Naive thymus-derived CD4-positive, alpha-beta T cell (primary cell): ENCODE measurements at regions of chr12 and their contacts with region 1.

Region 1: DNA sequence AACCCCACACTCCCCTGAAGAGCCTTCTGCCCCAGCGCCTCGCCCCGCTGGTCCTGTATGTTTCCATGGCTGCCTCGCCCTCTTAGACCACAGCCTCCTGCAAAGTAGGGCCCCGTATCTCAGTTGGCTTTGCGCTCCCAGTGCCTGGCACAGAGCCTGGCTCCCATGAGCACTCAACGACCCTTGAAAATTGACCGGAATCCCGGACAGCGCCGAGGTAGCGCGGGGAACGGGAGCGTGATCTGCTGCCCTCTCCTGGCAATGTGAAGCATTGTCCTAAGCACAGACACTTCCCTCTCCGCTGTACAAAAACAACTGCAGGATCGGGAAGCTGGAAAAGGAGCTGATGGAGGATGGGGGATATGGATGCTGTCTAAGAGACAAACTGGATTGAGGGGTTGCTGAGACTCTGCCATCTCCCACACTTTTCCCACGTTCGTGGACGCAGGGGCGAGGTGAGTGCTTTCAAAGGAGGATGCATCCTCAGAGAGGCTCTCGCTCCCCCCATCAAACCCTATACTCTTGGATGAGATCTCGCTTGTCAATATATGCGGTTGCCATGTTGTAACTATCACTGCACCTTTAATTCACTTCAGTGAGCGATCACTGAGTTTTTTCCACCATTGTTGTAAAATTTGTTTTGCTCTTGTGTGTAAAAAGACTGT is 10.7 kb upstream of the FKBP4 start:
- DNase-seq: peak in 8 of 9 donors; percentile 12 to 59 (median 42)
- ATAC-seq: peak; percentile 88
- H3K4me3 ChIP-seq: peak overlapping the region; percentile 27
- H3K4me3 Mint-ChIP-seq: peak overlapping the region; percentile 70 to 87 (median 78)
- H3K27ac ChIP-seq: no peak overlapping the region
- H3K27ac Mint-ChIP-seq: peak overlapping the region in 1 of 9 donors; percentile 66
- H3K4me1 ChIP-seq: peaks cover 0 to 6% of the 10 kb centered on the region in 2 donors
- H3K4me1 Mint-ChIP-seq: peaks cover 4 to 13% (median 9%) of the 10 kb centered on the region in 7 donors
- H3K27me3 ChIP-seq: no peaks in the 10 kb centered on the region
- H3K27me3 Mint-ChIP-seq: peaks cover 5 to 46% (median 15%) of the 10 kb centered on the region in 5 donors

Region 2: GRCh38 chr12:2682296-2683251 is 101.5 kb before region 1 on chr12:
- CTCF ChIA-PET with region 1: interaction called, 42 read pairs
- POLR2A ChIA-PET with region 1: interaction called, 5 read pairs
- intact Hi-C with region 1: loop called (anchors 1 kb)
- DNase-seq: peak in 7 of 9 donors; percentile 37 to 70 (median 59)
- ATAC-seq: peak; percentile 71
- H3K4me3 ChIP-seq: no peak overlapping the region
- H3K4me3 Mint-ChIP-seq: peak overlapping the region in 3 of 10 donors; percentile 43 to 67 (median 47)
- H3K27ac ChIP-seq: no peak overlapping the region
- H3K27ac Mint-ChIP-seq: peak overlapping the region; percentile 76 to 98 (median 88)
- H3K4me1 ChIP-seq: no peaks in the 10 kb centered on the region
- H3K4me1 Mint-ChIP-seq: peaks cover 5 to 12% (median 9%) of the 10 kb centered on the region in 7 donors
- H3K27me3 ChIP-seq: no peaks in the 10 kb centered on the region
- H3K27me3 Mint-ChIP-seq: no peaks in the 10 kb centered on the region

Region 3: GRCh38 chr12:2691006-2691344 is 93.1 kb before region 1 on chr12:
- CTCF ChIA-PET with region 1: interaction called, 25 read pairs
- POLR2A ChIA-PET with region 1: interaction called, 6 read pairs
- intact Hi-C with region 1: loop called in 1 of 2 experiments (anchors 1 kb)
- DNase-seq: peak in 8 of 9 donors; percentile 36 to 66 (median 56)
- ATAC-seq: peak; percentile 75
- H3K4me3 ChIP-seq: peak overlapping the region; percentile 92
- H3K4me3 Mint-ChIP-seq: peak overlapping the region; percentile 88 to 100 (median 93)
- H3K27ac ChIP-seq: peak overlapping the region; percentile 79
- H3K27ac Mint-ChIP-seq: peak overlapping the region; percentile 60 to 93 (median 86)
- H3K4me1 ChIP-seq: peaks cover 15 to 22% of the 10 kb centered on the region in 2 donors
- H3K4me1 Mint-ChIP-seq: peaks cover 36 to 57% (median 49%) of the 10 kb centered on the region in 7 donors
- H3K27me3 ChIP-seq: no peaks in the 10 kb centered on the region
- H3K27me3 Mint-ChIP-seq: peaks cover 0 to 12% (median 1%) of the 10 kb centered on the region in 5 donors

Region 4: DNA sequence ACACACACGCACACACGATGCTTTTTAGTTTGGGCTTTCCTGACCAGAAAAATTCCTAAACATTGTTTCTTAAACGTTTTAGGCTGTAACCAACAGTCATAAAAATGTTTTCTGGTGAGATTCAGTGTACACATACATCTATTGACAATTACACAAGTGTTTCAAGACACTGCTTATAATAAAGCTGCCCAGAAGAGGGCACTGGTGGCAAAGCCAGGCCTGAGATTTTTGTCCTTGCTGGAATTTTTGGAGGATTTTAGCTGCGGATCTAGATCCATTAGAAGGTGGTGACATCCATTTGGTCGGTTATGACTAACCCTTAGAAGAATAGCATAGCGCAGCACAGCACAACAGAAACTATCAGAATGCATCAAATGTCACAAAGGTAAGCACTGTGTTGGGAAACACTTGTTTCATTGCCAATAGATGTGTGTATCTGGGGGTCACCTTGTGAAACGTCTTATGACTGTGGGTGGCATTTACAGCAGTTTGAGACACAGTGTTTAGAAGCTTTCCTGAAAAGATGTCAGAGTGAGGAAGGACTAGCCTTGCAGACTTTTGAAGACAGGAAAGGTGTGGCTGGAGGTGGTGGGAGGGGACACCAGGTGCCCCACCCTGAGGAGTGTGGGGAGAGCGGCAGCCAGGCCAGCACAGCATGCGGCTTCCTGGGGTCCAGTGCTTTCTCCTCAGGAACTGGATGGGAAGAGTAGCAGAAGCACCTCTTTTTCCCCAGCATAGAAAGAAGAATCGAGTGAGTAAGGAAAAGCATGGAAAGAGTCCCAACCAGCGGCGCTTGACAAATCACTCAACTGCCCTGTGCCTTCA is 44.0 kb before region 1 on chr12:
- CTCF ChIA-PET with region 1: no interaction called
- POLR2A ChIA-PET with region 1: no interaction called
- intact Hi-C with region 1: loop called in 1 of 2 experiments (anchors 10 kb)
- DNase-seq: no peak
- ATAC-seq: no peak
- H3K4me3 ChIP-seq: no peak overlapping the region
- H3K4me3 Mint-ChIP-seq: no peak overlapping the region
- H3K27ac ChIP-seq: no peak overlapping the region
- H3K27ac Mint-ChIP-seq: no peak overlapping the region
- H3K4me1 ChIP-seq: no peaks in the 10 kb centered on the region
- H3K4me1 Mint-ChIP-seq: peaks cover 0 to 5% (median 0%) of the 10 kb centered on the region in 7 donors
- H3K27me3 ChIP-seq: peaks cover 0 to 2% of the 10 kb centered on the region in 2 donors
- H3K27me3 Mint-ChIP-seq: peaks cover 4 to 11% (median 10%) of the 10 kb centered on the region in 5 donors

Region 5: DNA sequence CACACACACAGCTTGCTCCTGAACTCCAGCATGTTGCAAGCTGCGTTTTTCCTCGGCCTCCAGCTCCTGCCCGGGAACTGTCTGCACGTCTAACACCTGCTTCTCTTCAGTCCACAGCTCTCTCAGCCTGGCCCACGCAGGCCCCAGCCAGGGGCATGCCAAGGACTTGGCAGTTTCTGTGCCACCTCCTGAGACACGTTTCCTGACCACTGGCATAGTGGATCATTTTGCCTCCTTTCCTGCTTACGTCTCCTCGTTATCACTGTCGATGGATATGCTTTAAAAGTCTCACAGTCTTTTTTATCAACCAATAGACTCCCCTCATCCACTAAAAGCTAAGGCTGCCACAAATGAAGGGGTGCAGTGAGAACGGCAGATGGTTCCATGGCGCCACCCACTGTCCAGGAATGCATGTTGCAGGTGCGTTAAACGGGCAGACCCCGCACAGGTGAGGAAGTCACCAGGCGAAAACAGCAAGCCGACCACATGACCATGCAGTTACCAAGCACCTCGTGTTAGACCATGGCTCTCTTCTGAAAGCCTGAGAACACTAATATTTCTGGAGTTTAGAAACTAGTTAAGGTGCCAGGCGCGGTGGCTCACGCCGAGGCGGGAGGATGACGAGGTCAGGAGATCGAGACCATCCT is 160.5 kb after region 1 on chr12:
- CTCF ChIA-PET with region 1: no interaction called
- POLR2A ChIA-PET with region 1: no interaction called
- intact Hi-C with region 1: loop called in 1 of 2 experiments (anchors 5 kb)
- DNase-seq: peak; percentile 4 to 58 (median 40)
- ATAC-seq: peak; percentile 65
- H3K4me3 ChIP-seq: no peak overlapping the region
- H3K4me3 Mint-ChIP-seq: peak overlapping the region in 4 of 10 donors; percentile 32 to 56 (median 38)
- H3K27ac ChIP-seq: no peak overlapping the region
- H3K27ac Mint-ChIP-seq: no peak overlapping the region
- H3K4me1 ChIP-seq: no peaks in the 10 kb centered on the region
- H3K4me1 Mint-ChIP-seq: peaks cover 0 to 5% (median 4%) of the 10 kb centered on the region in 7 donors
- H3K27me3 ChIP-seq: no peaks in the 10 kb centered on the region
- H3K27me3 Mint-ChIP-seq: peaks cover 3 to 5% (median 4%) of the 10 kb centered on the region in 5 donors